Right ventricle myocardium inferior (tissue), 1 donor: ENCODE measurements at regions of chr11 and their contacts with region 1.

Region 1: GRCh38 chr11:76768088-76768908 is 14.9 kb upstream of the TSKU start:
- DNase-seq: peak; percentile 73
- ATAC-seq: peak; percentile 21

Region 2: DNA sequence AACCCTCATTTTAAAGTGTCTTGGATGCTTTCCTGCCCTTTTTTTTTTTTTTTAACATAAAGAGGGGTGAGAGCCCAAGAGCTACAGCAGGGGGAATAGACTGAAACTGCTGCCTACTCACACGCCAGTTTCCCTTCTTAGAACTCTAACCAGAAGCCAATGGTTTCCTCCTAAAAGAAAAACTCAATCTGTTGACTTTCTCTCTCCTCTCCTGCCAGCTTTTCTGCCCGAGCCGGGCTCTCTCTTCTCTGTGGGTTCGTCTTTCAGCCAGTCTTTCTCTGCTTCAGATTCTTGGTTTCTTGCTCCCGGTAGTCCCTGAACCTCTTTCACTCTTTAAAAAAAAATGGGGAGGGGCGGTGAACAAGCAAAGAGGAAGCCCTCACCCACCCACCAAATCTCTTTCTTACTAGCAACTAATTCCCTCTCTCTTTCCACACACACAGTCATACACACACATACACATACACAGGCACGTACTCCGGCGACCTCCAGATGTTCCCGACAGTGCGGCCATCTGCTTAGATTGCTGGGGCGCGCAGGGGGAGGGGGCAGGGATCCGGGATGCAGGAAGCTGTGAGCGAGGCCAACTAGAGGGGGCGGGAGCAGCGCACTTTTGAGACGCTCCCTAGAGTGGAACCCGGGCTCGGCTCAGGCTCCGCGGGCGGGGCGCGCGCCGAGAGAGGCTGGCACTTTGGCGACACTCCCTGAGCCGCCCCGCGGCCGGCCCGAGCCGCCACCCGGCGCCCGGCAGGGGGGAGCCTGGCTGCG is 14.4 kb after region 1 on chr11:
- intact Hi-C with region 1: loop called (anchors 2 kb)
- DNase-seq: peak; percentile 92
- ATAC-seq: peak; percentile 78

Region 3: GRCh38 chr11:76860539-76861475 is 92.5 kb after region 1 on chr11 and contains the start of gene ACER3:
- intact Hi-C with region 1: no loop called
- DNase-seq: peak; percentile 97
- ATAC-seq: peak; percentile 100
- total RNA-seq, gene ACER3: 9.9 TPM